Natural killer cell (primary cell): ENCODE measurements at regions of chr15 and their contacts with region 1.

Region 1: DNA sequence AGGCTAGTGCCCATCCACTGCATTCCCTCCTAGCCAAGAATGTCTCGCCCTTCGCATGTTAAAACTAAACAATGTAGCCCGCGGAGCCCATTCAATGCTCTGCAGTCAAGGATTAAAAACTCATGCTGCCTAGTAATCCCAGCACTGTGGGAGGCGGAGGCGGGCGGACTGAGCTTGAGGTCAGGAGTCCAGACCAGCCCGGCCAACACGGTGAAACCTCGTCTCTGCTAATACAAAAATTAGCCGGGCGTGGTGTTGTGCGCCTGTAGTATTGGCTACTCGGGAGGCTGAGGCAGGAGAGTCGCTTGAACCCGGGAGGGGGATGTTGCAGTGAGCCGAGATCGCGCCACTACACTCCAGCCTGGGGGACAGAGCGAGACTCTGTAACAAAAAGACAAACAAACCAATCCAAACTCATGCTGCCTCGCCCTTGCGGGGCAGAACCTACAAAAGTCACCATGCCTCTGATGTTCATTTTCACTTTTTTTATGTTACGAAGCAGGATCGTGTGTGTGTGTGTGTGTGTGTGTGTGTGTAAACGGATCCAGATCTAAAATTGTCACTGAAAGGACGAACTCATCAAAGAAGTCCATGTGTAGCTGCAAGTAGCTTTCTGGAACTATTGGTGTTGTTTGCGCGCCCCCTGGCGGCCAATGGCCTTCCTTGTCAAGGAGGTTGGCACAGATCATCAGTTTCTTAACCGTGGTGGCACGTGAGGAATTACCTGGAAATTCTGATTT is 54.8 kb upstream of the SPESP1 start:
- DNase-seq: peak; percentile 87 to 93
- ATAC-seq: peak; percentile 79 to 88 (median 87)
- H3K4me3 ChIP-seq: no peak overlapping the region
- H3K4me3 Mint-ChIP-seq: no peak overlapping the region
- H3K27ac ChIP-seq: no peak overlapping the region
- H3K27ac Mint-ChIP-seq: no peak overlapping the region
- H3K4me1 ChIP-seq: peaks cover 6% of the 10 kb centered on the region
- H3K4me1 Mint-ChIP-seq: peaks cover 0 to 6% of the 10 kb centered on the region in 2 donors
- H3K27me3 ChIP-seq: peaks cover 3% of the 10 kb centered on the region
- H3K27me3 Mint-ChIP-seq: peaks cover 12 to 27% of the 10 kb centered on the region in 2 donors
- CTCF ChIP-seq: peak; percentile 79

Region 2: GRCh38 chr15:68550481-68551295 is 324.9 kb before region 1 on chr15:
- intact Hi-C with region 1: loop called (anchors 2 kb)
- DNase-seq: peak; percentile 60 to 81
- ATAC-seq: peak; percentile 36 to 73 (median 53)
- H3K4me3 ChIP-seq: no peak overlapping the region
- H3K4me3 Mint-ChIP-seq: no peak overlapping the region
- H3K27ac ChIP-seq: no peak overlapping the region
- H3K27ac Mint-ChIP-seq: no peak overlapping the region
- H3K4me1 ChIP-seq: no peaks in the 10 kb centered on the region
- H3K4me1 Mint-ChIP-seq: no peaks in the 10 kb centered on the region
- H3K27me3 ChIP-seq: no peaks in the 10 kb centered on the region
- H3K27me3 Mint-ChIP-seq: peaks cover 7 to 21% of the 10 kb centered on the region in 2 donors
- CTCF ChIP-seq: peak; percentile 94

Region 3: DNA sequence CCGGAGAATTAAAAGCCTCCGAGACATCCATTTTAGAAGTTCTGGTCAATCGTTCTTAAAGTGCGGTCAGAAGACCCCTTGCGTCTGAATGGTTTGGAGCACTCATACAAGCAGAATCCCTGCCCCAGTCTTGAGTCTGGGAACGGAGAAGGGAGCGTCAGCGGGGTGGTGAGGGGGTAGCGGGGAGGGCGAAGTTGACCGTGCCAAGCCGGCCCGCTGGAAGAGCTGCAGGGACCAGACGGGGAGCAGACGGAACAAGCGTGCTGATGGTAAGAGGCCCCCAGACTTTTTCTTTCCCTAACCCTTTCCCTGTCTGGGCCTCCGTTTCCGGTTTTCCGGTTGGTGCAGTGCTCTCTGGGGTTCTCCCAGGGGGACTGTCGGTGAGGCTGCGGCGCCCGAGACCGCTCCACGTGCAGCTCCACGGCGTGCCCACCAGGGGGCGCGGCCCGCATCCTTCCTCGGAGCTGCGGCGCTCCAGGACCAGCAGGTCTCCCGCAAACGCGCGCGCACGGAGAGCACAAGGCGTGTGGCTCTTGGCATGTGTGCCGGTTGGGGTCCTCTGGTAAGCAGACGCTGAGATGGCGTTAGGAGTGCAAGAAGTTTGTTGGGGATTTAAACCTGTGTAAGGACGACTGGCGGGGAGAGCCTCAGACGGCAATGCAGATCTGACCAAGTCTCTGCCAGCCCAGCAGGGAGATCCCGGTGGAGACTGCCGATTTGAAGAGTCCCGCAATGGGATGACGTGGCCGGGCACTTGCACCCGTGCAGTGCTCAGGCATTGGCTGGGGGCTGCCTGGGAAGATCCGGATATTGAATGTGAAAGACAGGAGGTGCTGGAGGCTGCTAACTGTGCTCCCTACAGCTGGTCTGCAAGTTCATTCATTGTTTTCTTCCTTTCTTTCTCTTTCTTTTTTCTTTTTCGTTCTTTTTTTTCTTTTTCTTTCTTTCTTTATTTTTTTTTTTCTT is 315.9 kb before region 1 on chr15:
- intact Hi-C with region 1: loop called (anchors 1 kb)
- DNase-seq: peak; percentile 67 to 82
- ATAC-seq: peak; percentile 85 to 97 (median 97)
- H3K4me3 ChIP-seq: no peak overlapping the region
- H3K4me3 Mint-ChIP-seq: peak overlapping the region; percentile 75
- H3K27ac ChIP-seq: no peak overlapping the region
- H3K27ac Mint-ChIP-seq: no peak overlapping the region
- H3K4me1 ChIP-seq: peaks cover 15% of the 10 kb centered on the region
- H3K4me1 Mint-ChIP-seq: peaks cover 16 to 23% of the 10 kb centered on the region in 2 donors
- H3K27me3 ChIP-seq: peaks cover 17% of the 10 kb centered on the region
- H3K27me3 Mint-ChIP-seq: peaks cover 49% of the 10 kb centered on the region in 2 donors
- CTCF ChIP-seq: peak; percentile 97

Region 4: GRCh38 chr15:68730471-68730919 is 145.1 kb before region 1 on chr15:
- intact Hi-C with region 1: loop called (anchors 1 kb)
- DNase-seq: peak in 1 of 2 donors; percentile 62
- ATAC-seq: peak in 1 of 3 donors; percentile 53
- H3K4me3 ChIP-seq: no peak overlapping the region
- H3K4me3 Mint-ChIP-seq: no peak overlapping the region
- H3K27ac ChIP-seq: no peak overlapping the region
- H3K27ac Mint-ChIP-seq: no peak overlapping the region
- H3K4me1 ChIP-seq: no peaks in the 10 kb centered on the region
- H3K4me1 Mint-ChIP-seq: peaks cover 0 to 6% of the 10 kb centered on the region in 2 donors
- H3K27me3 ChIP-seq: no peaks in the 10 kb centered on the region
- H3K27me3 Mint-ChIP-seq: peaks cover 3 to 5% of the 10 kb centered on the region in 2 donors
- CTCF ChIP-seq: peak; percentile 67

Region 5: DNA sequence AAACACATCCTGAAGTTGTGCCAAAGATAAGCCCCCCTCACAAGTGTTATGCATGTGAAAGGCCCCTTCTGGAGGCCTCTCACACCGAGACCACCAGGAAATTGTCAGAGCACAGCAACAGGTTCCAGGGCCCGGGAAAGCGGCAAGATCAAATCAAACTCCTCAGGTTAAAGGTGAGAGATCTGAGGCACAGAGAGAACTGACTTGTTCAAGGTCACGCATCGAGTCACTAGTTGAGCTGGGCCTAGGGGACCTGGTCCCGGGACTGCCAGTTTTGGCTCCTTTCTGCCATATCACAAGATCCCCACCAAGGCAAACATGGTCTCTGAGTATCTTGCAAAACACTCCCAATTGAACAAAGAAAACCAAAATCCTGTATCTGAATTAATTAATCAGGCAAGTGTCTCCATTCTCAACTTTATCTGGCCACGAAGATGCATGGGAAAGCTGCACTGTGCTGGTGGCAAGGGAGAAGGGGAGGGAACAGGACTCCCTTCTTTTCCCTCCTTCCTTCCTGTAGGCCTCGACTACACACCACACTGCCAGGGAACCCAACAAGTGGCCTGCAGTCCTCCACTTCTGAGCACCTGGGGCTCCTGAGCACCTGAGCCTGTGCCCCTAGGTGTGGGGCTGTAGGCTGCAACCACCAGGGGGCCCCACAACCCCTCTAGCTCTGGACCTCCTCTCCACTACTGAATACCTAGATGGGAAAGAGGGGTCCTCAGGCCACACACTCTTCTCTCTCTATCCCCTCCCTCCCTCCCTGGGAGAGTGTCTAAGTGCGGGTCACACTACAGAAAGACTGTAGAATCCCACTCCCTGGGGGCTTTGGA is 92.1 kb before region 1 on chr15:
- intact Hi-C with region 1: loop called (anchors 1 kb)
- DNase-seq: peak; percentile 53 to 84
- ATAC-seq: peak; percentile 64 to 67 (median 66)
- H3K4me3 ChIP-seq: no peak overlapping the region
- H3K4me3 Mint-ChIP-seq: peak overlapping the region; percentile 74
- H3K27ac ChIP-seq: no peak overlapping the region
- H3K27ac Mint-ChIP-seq: peak overlapping the region; percentile 81 to 85
- H3K4me1 ChIP-seq: peaks cover 51% of the 10 kb centered on the region
- H3K4me1 Mint-ChIP-seq: peaks cover 41 to 56% of the 10 kb centered on the region in 2 donors
- H3K27me3 ChIP-seq: no peaks in the 10 kb centered on the region
- H3K27me3 Mint-ChIP-seq: no peaks in the 10 kb centered on the region
- CTCF ChIP-seq: peak; percentile 70

Region 6: GRCh38 chr15:68829068-68829467 is 46.5 kb before region 1 on chr15:
- intact Hi-C with region 1: no loop called
- DNase-seq: peak in 1 of 2 donors; percentile 68
- ATAC-seq: peak; percentile 72 to 92 (median 84)
- H3K4me3 ChIP-seq: no peak overlapping the region
- H3K4me3 Mint-ChIP-seq: no peak overlapping the region
- H3K27ac ChIP-seq: no peak overlapping the region
- H3K27ac Mint-ChIP-seq: no peak overlapping the region
- H3K4me1 ChIP-seq: no peaks in the 10 kb centered on the region
- H3K4me1 Mint-ChIP-seq: peaks cover 0 to 4% of the 10 kb centered on the region in 2 donors
- H3K27me3 ChIP-seq: peaks cover 3% of the 10 kb centered on the region
- H3K27me3 Mint-ChIP-seq: peaks cover 9% of the 10 kb centered on the region in 2 donors
- CTCF ChIP-seq: peak; percentile 67

Region 7: DNA sequence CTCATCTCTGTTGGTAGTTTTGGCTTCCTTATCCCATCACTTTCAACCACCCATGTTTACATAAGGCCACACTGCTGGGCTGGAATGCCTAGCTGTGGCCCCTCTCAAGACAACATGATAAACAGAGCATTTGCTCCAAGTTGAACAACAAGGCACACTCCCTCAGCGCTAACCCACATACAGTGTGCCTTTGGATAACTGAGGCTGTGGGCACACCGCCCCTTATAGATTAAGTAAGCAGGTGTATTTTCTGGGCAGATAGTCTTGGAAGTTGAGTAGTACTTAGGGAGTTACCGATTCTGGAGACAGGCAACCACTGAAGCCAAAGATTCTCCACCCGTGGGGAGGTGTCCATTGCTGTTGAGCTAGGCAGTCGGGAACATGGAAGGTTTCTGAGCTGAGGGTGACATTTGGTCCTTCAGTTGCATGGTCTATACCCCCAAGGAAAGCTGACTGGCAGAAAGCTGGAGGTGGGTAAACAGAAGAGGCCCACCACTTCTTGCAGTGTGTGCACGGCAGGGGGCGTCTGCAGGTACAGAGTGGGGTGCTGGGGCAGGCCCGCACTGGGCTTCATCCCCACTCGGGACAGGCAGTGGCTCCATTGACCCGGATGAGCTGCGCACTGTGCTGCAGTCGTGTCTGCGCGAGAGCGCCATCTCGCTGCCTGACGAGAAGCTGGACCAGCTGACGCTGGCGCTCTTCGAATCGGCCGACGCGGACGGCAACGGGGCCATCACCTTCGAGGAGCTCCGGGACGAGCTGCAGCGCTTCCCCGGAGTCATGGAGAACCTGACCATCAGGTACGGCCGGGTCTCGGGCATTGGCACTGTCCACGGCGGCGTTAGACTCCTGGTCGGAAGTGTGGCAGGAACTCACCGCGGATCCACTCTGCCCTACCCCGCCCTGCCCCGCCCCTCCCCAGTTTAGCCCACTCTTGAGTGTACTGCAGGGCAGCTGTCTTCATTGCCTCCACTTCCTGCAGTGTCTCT is 155.8 kb after region 1 on chr15:
- intact Hi-C with region 1: no loop called
- DNase-seq: peak in 1 of 2 donors; percentile 46
- ATAC-seq: peak in 2 of 3 donors; percentile 62 to 93
- H3K4me3 ChIP-seq: no peak overlapping the region
- H3K4me3 Mint-ChIP-seq: peak overlapping the region; percentile 69
- H3K27ac ChIP-seq: no peak overlapping the region
- H3K27ac Mint-ChIP-seq: no peak overlapping the region
- H3K4me1 ChIP-seq: peaks cover 8% of the 10 kb centered on the region
- H3K4me1 Mint-ChIP-seq: peaks cover 4 to 5% of the 10 kb centered on the region in 2 donors
- H3K27me3 ChIP-seq: no peaks in the 10 kb centered on the region
- H3K27me3 Mint-ChIP-seq: peaks cover 9 to 27% of the 10 kb centered on the region in 2 donors
- CTCF ChIP-seq: no peak